H1 (cell line): ENCODE measurements at regions of chr3 and their contacts with region 1.

Region 1: GRCh38 chr3:192917404-192918274 is at the start of gene MB21D2:
- DNase-seq: peak in 1 of 2 experiments; percentile 69
- H3K4me3 ChIP-seq: peak within 1 kb of the TSS; percentile 89 to 98 (median 92)
- H3K27ac ChIP-seq: peak within 1 kb of the TSS; percentile 88
- H3K4me1 ChIP-seq: peaks cover 3 to 26% (median 16%) of the 10 kb centered on the region in 4 experiments; a peak in 5 of 7 replicates
- H3K27me3 ChIP-seq: no peaks in the 10 kb centered on the region; a peak in 1 of 7 replicates
- CTCF ChIP-seq: no peak
- EP300 ChIP-seq: no peak
- POLR2A ChIP-seq: peak; percentile 43 to 67
- RAD21 ChIP-seq: no peak
- total RNA-seq, gene MB21D2: 20.7 and 21.0 TPM in 2 replicates

Region 2: GRCh38 chr3:192879336-192880106 is 38.1 kb before region 1 on chr3:
- CTCF ChIA-PET with region 1: interaction called, 16 read pairs
- POLR2A ChIA-PET with region 1: interaction called, 17 read pairs
- DNase-seq: peak in 1 of 2 experiments; percentile 78
- H3K4me3 ChIP-seq: no peak overlapping the region
- H3K27ac ChIP-seq: peak overlapping the region; percentile 37; the same call in 1 of the 2 replicates
- H3K4me1 ChIP-seq: peaks cover 2 to 10% (median 7%) of the 10 kb centered on the region in 4 experiments
- H3K27me3 ChIP-seq: no peaks in the 10 kb centered on the region
- CTCF ChIP-seq: no peak
- EP300 ChIP-seq: no peak
- POLR2A ChIP-seq: no peak
- RAD21 ChIP-seq: no peak

Region 3: DNA sequence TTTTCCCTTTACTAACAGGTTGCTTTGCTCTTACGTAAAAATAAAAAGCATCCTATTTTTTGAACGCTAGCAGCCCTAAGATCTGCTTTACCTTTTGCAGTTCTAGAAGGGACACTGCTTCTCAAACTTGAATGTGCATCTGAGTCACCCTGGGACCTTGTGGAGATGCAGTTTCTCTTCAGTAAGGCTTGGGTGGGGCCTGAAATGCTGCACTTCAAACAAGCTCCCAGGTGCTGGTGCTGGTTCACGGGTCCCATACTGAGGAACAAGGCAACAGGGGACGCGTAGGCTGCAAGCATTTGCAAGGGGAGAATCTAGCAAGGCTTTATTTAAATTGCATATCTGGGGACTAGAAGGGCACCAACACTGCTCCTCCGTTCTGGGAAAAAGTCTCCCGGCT is 29.9 kb before region 1 on chr3:
- CTCF ChIA-PET with region 1: interaction called, 49 read pairs
- POLR2A ChIA-PET with region 1: interaction called, 15 read pairs
- DNase-seq: no peak
- H3K4me3 ChIP-seq: no peak overlapping the region
- H3K27ac ChIP-seq: no peak overlapping the region
- H3K4me1 ChIP-seq: peaks cover 1 to 21% (median 19%) of the 10 kb centered on the region in 4 experiments; a peak in 5 of 7 replicates
- H3K27me3 ChIP-seq: no peaks in the 10 kb centered on the region
- CTCF ChIP-seq: no peak
- EP300 ChIP-seq: no peak
- POLR2A ChIP-seq: no peak
- RAD21 ChIP-seq: no peak

Region 4: GRCh38 chr3:192892981-192893700 is 24.5 kb before region 1 on chr3:
- CTCF ChIA-PET with region 1: interaction called, 49 read pairs
- POLR2A ChIA-PET with region 1: interaction called, 15 read pairs
- DNase-seq: no peak
- H3K4me3 ChIP-seq: peak overlapping the region in 1 of 4 experiments; percentile 20; a peak in 1 of 8 replicates
- H3K27ac ChIP-seq: peak overlapping the region; percentile 6; the same call in 1 of the 2 replicates
- H3K4me1 ChIP-seq: peaks cover 0 to 29% (median 25%) of the 10 kb centered on the region in 4 experiments; a peak in 6 of 7 replicates
- H3K27me3 ChIP-seq: no peaks in the 10 kb centered on the region
- CTCF ChIP-seq: no peak
- EP300 ChIP-seq: no peak
- POLR2A ChIP-seq: no peak
- RAD21 ChIP-seq: no peak